Right cardiac atrium (tissue), 5 donors: ENCODE measurements at regions of chr5 and their contacts with region 1.

Region 1: GRCh38 chr5:81838307-81838906 is 87.5 kb upstream of the SSBP2 start:
- DNase-seq: no peak
- ATAC-seq: peak; percentile 66 to 80
- H3K4me3 ChIP-seq: no peak overlapping the region
- H3K27ac ChIP-seq: no peak overlapping the region
- H3K4me1 ChIP-seq: no peaks in the 10 kb centered on the region
- H3K27me3 ChIP-seq: no peaks in the 10 kb centered on the region

Region 2: DNA sequence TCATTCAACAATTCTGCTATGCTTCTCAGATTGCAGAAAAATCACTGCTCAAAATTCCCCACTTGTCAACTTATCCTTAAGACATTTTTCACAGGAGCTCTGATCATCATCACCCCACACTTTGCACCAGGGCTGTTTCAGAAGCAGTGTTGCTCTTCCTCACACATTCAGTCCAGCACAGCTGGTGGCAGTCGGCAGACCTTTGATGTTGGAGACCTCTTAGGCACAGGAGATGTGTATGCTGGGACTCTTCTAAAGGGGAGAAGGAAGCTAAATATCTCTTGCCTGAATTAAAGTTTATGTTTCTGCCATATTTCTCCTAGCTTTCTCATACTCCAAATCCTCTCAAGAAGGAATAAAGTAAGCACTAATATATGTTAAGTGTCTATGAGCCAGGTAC is 42.7 kb before region 1 on chr5:
- intact Hi-C with region 1: loop called in 1 of 4 experiments (anchors 5 kb)
- DNase-seq: no peak
- ATAC-seq: no peak
- H3K4me3 ChIP-seq: no peak overlapping the region
- H3K27ac ChIP-seq: no peak overlapping the region
- H3K4me1 ChIP-seq: peaks cover 2% of the 10 kb centered on the region
- H3K27me3 ChIP-seq: no peaks in the 10 kb centered on the region